CD4-positive, alpha-beta memory T cell (primary cell): ENCODE measurements at regions of chr7 and their contacts with region 1.

Region 1: DNA sequence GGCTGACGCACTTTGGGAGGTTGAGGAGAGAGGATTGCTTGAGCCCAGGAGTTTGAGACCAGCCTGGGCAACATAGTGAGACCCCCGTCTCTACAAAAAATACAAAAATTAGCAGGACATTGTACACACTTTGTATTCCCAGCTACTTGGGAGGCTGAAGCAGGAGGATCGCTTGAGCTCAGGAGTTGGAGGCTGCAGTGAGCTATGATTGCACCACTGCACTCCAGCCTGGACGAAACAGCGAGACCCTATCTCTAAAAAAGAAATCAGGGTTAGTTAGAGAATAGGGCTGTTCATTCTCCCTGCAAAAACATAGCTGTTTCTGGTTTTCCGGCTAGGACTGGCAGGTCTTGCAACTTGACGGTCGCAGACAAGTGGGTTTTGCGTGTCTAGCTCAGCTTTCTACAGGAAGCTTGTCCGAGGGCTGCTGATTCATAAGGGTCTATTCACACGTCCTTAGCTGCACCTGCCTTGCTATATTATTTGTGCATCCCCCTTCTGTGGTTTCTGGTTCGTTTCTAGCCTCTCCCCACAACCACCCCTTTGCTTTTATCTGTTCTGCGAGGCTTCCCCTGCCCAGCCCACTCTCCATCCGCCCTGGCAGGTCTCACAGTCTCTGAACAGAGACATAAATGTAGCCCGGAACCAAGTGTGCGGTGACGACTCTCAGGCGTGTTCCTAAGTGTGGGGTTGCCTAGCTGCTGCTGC is 10.7 kb downstream of the AMZ1 start:
- DNase-seq: peak; percentile 60 to 80 (median 65)
- H3K4me3 ChIP-seq: peak overlapping the region; percentile 21 to 22
- H3K4me3 Mint-ChIP-seq: peak overlapping the region; percentile 58 to 92 (median 77)
- H3K27ac ChIP-seq: peak overlapping the region; percentile 33
- H3K27ac Mint-ChIP-seq: peak overlapping the region; percentile 12 to 84 (median 55)
- H3K4me1 ChIP-seq: peaks cover 21% of the 10 kb centered on the region
- H3K4me1 Mint-ChIP-seq: peaks cover 18 to 25% (median 22%) of the 10 kb centered on the region in 4 donors
- H3K27me3 ChIP-seq: no peaks in the 10 kb centered on the region
- H3K27me3 Mint-ChIP-seq: no peaks in the 10 kb centered on the region

Region 2: DNA sequence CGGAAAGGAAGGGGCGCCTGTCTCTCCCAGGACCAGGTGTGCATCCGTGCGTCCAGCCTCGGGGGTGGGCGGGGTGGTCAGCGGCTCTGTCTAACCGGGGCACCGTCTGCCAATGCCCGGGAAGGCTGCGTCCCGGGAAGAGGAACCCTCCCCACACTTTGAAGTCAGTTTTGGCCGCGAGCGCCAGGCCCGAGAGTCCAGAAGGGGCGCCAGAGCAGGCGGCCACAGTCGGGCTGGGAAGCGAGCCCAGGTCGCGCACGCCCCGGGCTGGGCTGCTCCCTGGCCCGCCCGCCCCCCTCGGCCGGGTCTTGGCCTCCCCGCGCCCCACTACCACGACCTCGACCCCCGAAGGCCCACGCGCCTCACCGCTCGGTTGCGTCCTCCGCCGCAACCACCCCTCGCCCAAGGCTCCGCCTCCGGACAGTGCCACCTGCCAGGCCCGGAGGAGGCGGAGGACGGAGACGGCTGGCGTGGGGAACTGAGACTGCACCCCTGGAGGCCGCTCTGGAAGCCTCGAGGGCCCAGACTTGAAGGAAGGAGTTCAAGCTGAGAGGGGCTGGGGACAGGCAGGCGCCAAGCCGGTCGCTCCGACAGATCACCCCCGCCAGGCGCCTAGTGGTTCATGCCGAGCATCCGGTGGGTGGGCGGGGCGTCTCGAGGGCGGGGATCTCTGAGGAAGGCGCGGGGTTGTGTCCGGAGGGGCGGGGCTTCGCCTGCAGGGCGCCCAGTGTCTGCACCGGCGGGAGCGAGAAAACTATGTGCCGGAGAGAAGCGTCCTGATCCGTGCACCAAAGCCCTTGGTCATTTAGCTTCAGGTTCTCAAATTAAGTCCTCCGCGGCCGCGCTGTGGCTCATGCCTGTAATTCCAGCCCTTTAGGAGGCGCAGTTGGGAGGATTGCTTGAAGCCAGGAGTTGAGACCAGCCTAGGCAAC is 143.3 kb before region 1 on chr7 and contains the start of gene BRAT1:
- CTCF ChIA-PET with region 1: no interaction called
- POLR2A ChIA-PET with region 1: no interaction called
- intact Hi-C with region 1: no loop called
- DNase-seq: peak; percentile 91 to 95 (median 92)
- H3K4me3 ChIP-seq: peak within 1 kb of the TSS; percentile 52 to 82
- H3K4me3 Mint-ChIP-seq: peak within 1 kb of the TSS; percentile 84 to 91 (median 86)
- H3K27ac ChIP-seq: peak within 1 kb of the TSS; percentile 97
- H3K27ac Mint-ChIP-seq: peak within 1 kb of the TSS; percentile 81 to 92 (median 85)
- H3K4me1 ChIP-seq: peaks cover 49% of the 10 kb centered on the region
- H3K4me1 Mint-ChIP-seq: peaks cover 18 to 51% (median 31%) of the 10 kb centered on the region in 4 donors
- H3K27me3 ChIP-seq: no peaks in the 10 kb centered on the region
- H3K27me3 Mint-ChIP-seq: no peaks in the 10 kb centered on the region
- total RNA-seq, gene BRAT1: 37.0 to 41.4 TPM

Region 3: GRCh38 chr7:2670720-2671391 is 27.9 kb before region 1 on chr7:
- CTCF ChIA-PET with region 1: interaction called, 16 read pairs
- POLR2A ChIA-PET with region 1: no interaction called
- intact Hi-C with region 1: no loop called
- DNase-seq: peak; percentile 53 to 62 (median 56)
- H3K4me3 ChIP-seq: no peak overlapping the region
- H3K4me3 Mint-ChIP-seq: peak overlapping the region in 3 of 8 donors; percentile 33 to 56 (median 43)
- H3K27ac ChIP-seq: no peak overlapping the region
- H3K27ac Mint-ChIP-seq: peak overlapping the region in 2 of 7 donors; percentile 29 to 53
- H3K4me1 ChIP-seq: peaks cover 7% of the 10 kb centered on the region
- H3K4me1 Mint-ChIP-seq: peaks cover 0 to 12% (median 4%) of the 10 kb centered on the region in 4 donors
- H3K27me3 ChIP-seq: no peaks in the 10 kb centered on the region
- H3K27me3 Mint-ChIP-seq: peaks cover 8 to 11% of the 10 kb centered on the region in 2 donors

Region 4: GRCh38 chr7:2720582-2721491 is 22.1 kb after region 1 on chr7:
- CTCF ChIA-PET with region 1: interaction called, 14 read pairs
- POLR2A ChIA-PET with region 1: interaction called, 13 read pairs
- intact Hi-C with region 1: no loop called
- DNase-seq: peak; percentile 41 to 74 (median 46)
- H3K4me3 ChIP-seq: no peak overlapping the region
- H3K4me3 Mint-ChIP-seq: peak overlapping the region in 5 of 8 donors; percentile 18 to 67 (median 40)
- H3K27ac ChIP-seq: no peak overlapping the region
- H3K27ac Mint-ChIP-seq: peak overlapping the region in 3 of 7 donors; percentile 16 to 53 (median 43)
- H3K4me1 ChIP-seq: peaks cover 48% of the 10 kb centered on the region
- H3K4me1 Mint-ChIP-seq: peaks cover 20 to 48% (median 32%) of the 10 kb centered on the region in 4 donors
- H3K27me3 ChIP-seq: no peaks in the 10 kb centered on the region
- H3K27me3 Mint-ChIP-seq: peaks cover 0 to 3% of the 10 kb centered on the region in 2 donors